CD8-positive, alpha-beta memory T cell (primary cell): ENCODE measurements at regions of chr12 and their contacts with region 1.

Region 1: DNA sequence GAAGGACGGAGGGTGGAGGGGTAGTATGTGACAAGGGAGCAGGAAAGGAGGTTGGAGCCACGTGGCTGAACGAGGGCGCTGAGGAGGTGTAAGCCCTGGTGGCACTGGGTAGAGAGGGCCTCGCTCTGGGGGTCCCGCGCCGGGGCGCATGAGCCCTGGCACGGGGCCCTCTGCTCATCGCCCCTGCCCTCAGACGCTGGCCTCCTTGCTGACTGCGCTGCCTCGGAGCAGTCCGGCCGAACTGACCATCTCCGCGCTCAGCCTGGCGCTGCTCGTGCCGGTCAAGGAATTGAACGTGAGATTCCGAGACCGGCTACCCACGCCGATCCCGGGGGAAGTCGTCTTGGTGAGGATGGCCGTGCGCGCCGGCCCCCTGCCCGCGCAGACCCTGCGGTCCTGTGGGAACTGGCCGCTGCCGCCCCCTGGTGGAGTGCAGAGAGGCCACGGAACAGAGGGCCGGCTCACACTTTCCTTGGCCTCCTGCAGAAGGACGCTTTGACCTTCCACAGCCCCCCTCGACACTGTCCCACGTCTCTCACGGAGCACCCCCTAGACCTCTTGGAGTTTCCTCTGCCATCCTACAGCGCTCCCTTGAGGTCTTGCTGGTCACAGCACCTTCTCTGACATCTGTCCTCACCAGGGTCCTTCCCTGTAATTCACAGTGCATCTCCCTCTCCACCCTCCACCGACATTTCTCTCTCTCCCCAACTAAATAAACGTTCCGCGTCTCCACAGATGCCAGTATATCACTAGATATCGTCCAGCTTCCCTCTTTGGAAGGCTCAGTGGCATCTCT is 10.5 kb downstream of the ARHGEF25 start:
- DNase-seq: peak; percentile 39 to 65 (median 50)
- H3K4me3 ChIP-seq: peak overlapping the region; percentile 59
- H3K4me3 Mint-ChIP-seq: peak overlapping the region; percentile 49 to 91 (median 84)
- H3K27ac ChIP-seq: no peak overlapping the region
- H3K27ac Mint-ChIP-seq: peak overlapping the region in 3 of 8 donors; percentile 19 to 53 (median 44)
- H3K4me1 ChIP-seq: peaks cover 30% of the 10 kb centered on the region
- H3K4me1 Mint-ChIP-seq: peaks cover 28 to 34% (median 32%) of the 10 kb centered on the region in 3 donors
- H3K27me3 ChIP-seq: peaks cover 77% of the 10 kb centered on the region
- H3K27me3 Mint-ChIP-seq: peaks cover 86 to 92% of the 10 kb centered on the region in 2 donors

Region 2: DNA sequence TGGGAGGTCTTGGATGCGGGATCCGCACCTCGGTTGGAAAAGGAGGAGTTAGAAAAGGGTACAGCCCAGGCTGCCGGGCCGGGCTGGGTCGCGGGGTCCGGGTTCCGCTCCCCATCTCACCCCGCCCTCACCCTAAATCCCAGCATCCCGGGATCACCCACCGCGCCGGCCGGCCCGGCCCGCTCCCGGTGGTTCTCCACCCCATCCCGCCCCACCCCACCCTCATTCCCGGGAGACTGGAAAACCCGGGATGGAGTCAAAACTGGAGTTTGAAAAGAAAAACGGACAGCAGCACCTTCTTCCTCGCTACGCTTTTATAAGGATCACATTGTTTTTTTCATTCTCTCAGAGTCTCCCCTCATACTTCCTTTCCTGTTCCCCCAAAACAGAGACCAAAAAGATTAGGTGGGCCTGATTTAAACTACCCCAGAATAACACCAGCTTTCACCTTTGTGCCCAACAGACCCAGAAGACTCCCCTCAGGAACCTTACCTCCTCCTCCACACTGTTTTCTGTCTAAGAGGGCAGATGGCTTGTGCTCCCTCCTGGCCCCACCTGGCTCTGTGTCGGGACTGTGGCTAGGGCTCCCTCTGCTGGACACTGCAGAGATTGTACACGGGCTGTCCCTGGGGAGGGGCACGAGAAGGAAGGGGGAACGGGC is 159.3 kb before region 1 on chr12:
- CTCF ChIA-PET with region 1: interaction called, 10 read pairs
- POLR2A ChIA-PET with region 1: interaction called, 4 read pairs
- DNase-seq: peak; percentile 77 to 92 (median 83)
- H3K4me3 ChIP-seq: peak overlapping the region; percentile 69
- H3K4me3 Mint-ChIP-seq: peak overlapping the region; percentile 85 to 95 (median 93)
- H3K27ac ChIP-seq: peak overlapping the region; percentile 9
- H3K27ac Mint-ChIP-seq: peak overlapping the region; percentile 8 to 93 (median 80)
- H3K4me1 ChIP-seq: peaks cover 33% of the 10 kb centered on the region
- H3K4me1 Mint-ChIP-seq: peaks cover 30 to 49% (median 36%) of the 10 kb centered on the region in 3 donors
- H3K27me3 ChIP-seq: peaks cover 7% of the 10 kb centered on the region
- H3K27me3 Mint-ChIP-seq: peaks cover 6 to 19% of the 10 kb centered on the region in 2 donors

Region 3: GRCh38 chr12:57576613-57577160 is 45.0 kb before region 1 on chr12:
- CTCF ChIA-PET with region 1: interaction called, 85 read pairs
- POLR2A ChIA-PET with region 1: no interaction called
- DNase-seq: no peak
- H3K4me3 ChIP-seq: no peak overlapping the region
- H3K4me3 Mint-ChIP-seq: no peak overlapping the region
- H3K27ac ChIP-seq: no peak overlapping the region
- H3K27ac Mint-ChIP-seq: peak overlapping the region in 1 of 8 donors; percentile 15
- H3K4me1 ChIP-seq: no peaks in the 10 kb centered on the region
- H3K4me1 Mint-ChIP-seq: no peaks in the 10 kb centered on the region
- H3K27me3 ChIP-seq: no peaks in the 10 kb centered on the region
- H3K27me3 Mint-ChIP-seq: peaks cover 0 to 2% of the 10 kb centered on the region in 2 donors

Region 4: DNA sequence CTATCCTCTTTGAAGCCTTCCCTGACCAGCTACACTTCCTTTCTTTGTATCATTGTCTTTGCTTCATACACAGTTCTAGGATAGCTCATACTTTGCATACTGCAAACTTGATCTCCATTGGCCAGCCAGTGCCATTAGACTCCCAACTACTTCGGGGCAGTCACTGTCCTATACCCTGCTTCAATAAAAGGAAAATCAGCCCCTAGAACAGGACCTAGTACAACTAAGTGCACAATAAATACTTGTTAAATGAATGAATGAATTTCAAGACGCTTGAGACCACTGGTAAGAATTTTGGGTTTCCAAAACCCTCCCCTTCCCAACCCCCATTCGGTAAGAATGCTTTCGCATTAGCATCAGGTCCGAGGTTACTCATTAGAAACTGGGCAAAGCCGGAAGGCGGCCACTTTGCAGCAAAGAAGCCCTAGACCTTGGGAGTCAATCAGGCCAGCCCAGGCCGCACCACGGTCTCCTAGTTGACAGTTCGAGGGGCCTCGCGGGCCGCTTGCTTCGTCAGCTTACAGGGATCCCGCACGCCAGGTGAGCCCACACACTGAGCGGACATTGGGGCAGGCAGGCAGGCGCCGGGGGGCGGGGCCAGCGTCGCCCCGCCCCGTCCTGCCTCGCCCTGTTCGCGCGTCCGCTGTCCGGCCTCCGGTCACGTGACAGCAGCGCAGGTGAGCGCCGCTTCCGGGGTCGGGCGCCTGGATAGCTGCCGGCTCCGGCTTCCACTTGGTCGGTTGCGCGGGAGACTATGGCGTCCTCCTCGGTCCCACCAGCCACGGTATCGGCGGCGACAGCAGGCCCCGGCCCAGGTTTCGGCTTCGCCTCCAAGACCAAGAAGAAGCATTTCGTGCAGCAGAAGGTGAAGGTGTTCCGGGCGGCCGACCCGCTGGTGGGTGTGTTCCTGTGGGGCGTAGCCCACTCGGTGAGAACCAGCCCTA is 30.9 kb before region 1 on chr12 and contains the start of gene PIP4K2C:
- CTCF ChIA-PET with region 1: interaction called, 85 read pairs
- POLR2A ChIA-PET with region 1: no interaction called
- DNase-seq: peak; percentile 70 to 86 (median 78)
- H3K4me3 ChIP-seq: peak within 1 kb of the TSS; percentile 84
- H3K4me3 Mint-ChIP-seq: peak within 1 kb of the TSS; percentile 85 to 91 (median 91)
- H3K27ac ChIP-seq: peak within 1 kb of the TSS; percentile 64
- H3K27ac Mint-ChIP-seq: peak within 1 kb of the TSS; percentile 76 to 98 (median 92)
- H3K4me1 ChIP-seq: peaks cover 26% of the 10 kb centered on the region
- H3K4me1 Mint-ChIP-seq: peaks cover 29 to 39% (median 38%) of the 10 kb centered on the region in 3 donors
- H3K27me3 ChIP-seq: no peaks in the 10 kb centered on the region
- H3K27me3 Mint-ChIP-seq: peaks cover 2 to 4% of the 10 kb centered on the region in 2 donors
- total RNA-seq, gene PIP4K2C: 24.7 to 29.7 TPM

Region 5: GRCh38 chr12:57632694-57633477 is 11.2 kb after region 1 on chr12 and contains the start of gene B4GALNT1:
- CTCF ChIA-PET with region 1: interaction called, 15 read pairs
- POLR2A ChIA-PET with region 1: interaction called, 3 read pairs
- DNase-seq: peak; percentile 44 to 71 (median 57)
- H3K4me3 ChIP-seq: peak within 1 kb of the TSS; percentile 49
- H3K4me3 Mint-ChIP-seq: peak within 1 kb of the TSS; percentile 26 to 84 (median 71)
- H3K27ac ChIP-seq: no peak within 1 kb of the TSS
- H3K27ac Mint-ChIP-seq: peak within 1 kb of the TSS in 3 of 8 donors; percentile 14 to 33 (median 19)
- H3K4me1 ChIP-seq: peaks cover 11% of the 10 kb centered on the region
- H3K4me1 Mint-ChIP-seq: peaks cover 0 to 15% (median 8%) of the 10 kb centered on the region in 3 donors
- H3K27me3 ChIP-seq: peaks cover 22% of the 10 kb centered on the region
- H3K27me3 Mint-ChIP-seq: peaks cover 35 to 59% of the 10 kb centered on the region in 2 donors
- total RNA-seq, gene B4GALNT1: 2.9 to 4.1 TPM

Region 6: GRCh38 chr12:57657744-57658143 is 36.0 kb after region 1 on chr12:
- CTCF ChIA-PET with region 1: no interaction called
- POLR2A ChIA-PET with region 1: no interaction called
- DNase-seq: no peak
- H3K4me3 ChIP-seq: no peak overlapping the region
- H3K4me3 Mint-ChIP-seq: no peak overlapping the region
- H3K27ac ChIP-seq: no peak overlapping the region
- H3K27ac Mint-ChIP-seq: no peak overlapping the region
- H3K4me1 ChIP-seq: no peaks in the 10 kb centered on the region
- H3K4me1 Mint-ChIP-seq: no peaks in the 10 kb centered on the region
- H3K27me3 ChIP-seq: no peaks in the 10 kb centered on the region
- H3K27me3 Mint-ChIP-seq: peaks cover 2 to 28% of the 10 kb centered on the region in 2 donors

Region 7: DNA sequence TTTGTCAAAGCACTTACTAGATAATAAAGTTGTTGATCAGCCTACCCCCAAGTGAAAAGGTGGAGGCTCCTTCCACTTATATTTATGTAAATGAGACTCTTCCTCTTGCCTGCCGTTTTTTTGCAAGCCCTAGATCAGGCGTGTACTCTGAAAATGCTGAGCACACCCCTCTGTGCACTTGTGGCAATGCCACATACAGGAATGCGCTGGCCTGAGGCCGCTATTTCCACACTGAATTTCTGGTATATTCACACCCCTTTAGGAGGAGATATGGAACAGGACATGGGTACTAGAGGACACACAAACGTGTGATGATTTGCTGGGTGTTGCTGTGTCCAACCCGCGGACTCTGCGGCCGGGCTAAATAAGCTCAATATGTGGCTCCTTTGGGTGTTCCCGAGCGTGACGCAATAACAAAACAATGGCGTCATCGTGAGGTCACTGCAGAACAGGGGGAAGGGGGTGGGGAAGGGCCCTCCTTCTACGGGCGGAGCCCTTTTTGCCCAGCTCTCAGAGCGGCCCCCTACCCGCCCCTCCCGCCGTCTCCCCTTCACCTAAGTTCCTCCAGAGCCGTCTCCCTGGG is 122.6 kb after region 1 on chr12:
- CTCF ChIA-PET with region 1: interaction called, 10 read pairs
- POLR2A ChIA-PET with region 1: no interaction called
- DNase-seq: peak in 3 of 5 donors; percentile 51 to 86 (median 66)
- H3K4me3 ChIP-seq: peak overlapping the region; percentile 74
- H3K4me3 Mint-ChIP-seq: peak overlapping the region; percentile 85 to 96 (median 90)
- H3K27ac ChIP-seq: peak overlapping the region; percentile 89
- H3K27ac Mint-ChIP-seq: peak overlapping the region; percentile 84 to 99 (median 97)
- H3K4me1 ChIP-seq: peaks cover 51% of the 10 kb centered on the region
- H3K4me1 Mint-ChIP-seq: peaks cover 51 to 67% (median 57%) of the 10 kb centered on the region in 3 donors
- H3K27me3 ChIP-seq: no peaks in the 10 kb centered on the region
- H3K27me3 Mint-ChIP-seq: peaks cover 0 to 5% of the 10 kb centered on the region in 2 donors